ENCODE measurements at regions of chr14 and their contacts with region 1.

Region 1: DNA sequence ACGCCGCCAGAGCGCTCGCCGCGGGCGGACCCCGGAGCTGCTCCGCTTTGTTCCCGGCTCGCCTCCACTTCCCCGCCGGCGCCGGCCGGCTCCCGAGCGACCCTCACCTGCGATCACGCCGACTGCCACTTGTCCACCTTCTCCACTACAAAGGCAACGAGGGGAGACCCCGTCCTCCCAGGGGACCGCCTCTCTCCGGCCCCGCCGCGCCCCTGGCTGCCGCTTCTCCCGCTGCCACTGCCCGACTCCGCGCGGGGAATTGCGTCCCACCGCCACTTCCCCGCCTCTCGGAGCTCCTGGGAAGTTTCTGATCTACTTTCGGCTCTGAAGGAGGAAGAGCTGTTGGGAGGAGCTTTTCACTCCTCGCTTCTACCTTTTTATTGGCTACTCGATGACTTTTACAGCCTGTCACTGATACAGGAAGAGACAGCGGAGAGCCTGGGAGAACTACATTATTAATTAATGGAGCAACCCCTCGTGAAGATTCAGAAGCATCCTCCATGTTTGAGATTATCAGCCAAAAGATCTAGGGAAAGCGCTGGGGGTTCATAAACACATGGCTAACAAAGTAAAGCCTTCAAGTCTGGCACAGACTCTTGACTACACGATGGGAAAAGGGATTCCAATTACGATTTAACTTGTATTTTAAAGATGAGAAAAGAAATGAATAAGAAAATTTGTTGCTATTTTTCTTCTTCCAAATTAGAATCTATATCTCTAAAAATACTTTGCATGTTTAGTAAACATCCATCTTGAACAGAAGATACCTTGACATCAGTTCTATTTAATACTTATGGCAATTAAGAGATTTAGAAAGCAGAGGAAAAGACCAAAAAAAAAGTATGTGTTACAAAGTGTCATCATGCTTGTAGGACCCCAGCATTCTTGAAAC is at the start of gene BAZ1A:
- DNase-seq: peak; percentile 26 to 61 (median 55)
- ATAC-seq: peak; percentile 14
- H3K4me3 ChIP-seq: peak within 1 kb of the TSS; percentile 85
- H3K4me3 Mint-ChIP-seq: peak within 1 kb of the TSS; percentile 91 to 100 (median 99)
- H3K27ac ChIP-seq: peak within 1 kb of the TSS; percentile 96
- H3K27ac Mint-ChIP-seq: peak within 1 kb of the TSS; percentile 94 to 100 (median 99)
- H3K4me1 ChIP-seq: peaks cover 10 to 19% of the 10 kb centered on the region in 2 donors
- H3K4me1 Mint-ChIP-seq: peaks cover 18 to 40% (median 34%) of the 10 kb centered on the region in 7 donors
- H3K27me3 ChIP-seq: no peaks in the 10 kb centered on the region
- H3K27me3 Mint-ChIP-seq: no peaks in the 10 kb centered on the region
- total RNA-seq, gene BAZ1A: 47.4 to 62.5 (median 53.3) TPM

Region 2: GRCh38 chr14:33740531-33740930 is 1134.7 kb before region 1 on chr14:
- CTCF ChIA-PET with region 1: no interaction called
- POLR2A ChIA-PET with region 1: no interaction called
- intact Hi-C with region 1: no loop called
- DNase-seq: no peak
- ATAC-seq: no peak
- H3K4me3 ChIP-seq: no peak overlapping the region
- H3K4me3 Mint-ChIP-seq: no peak overlapping the region
- H3K27ac ChIP-seq: no peak overlapping the region
- H3K27ac Mint-ChIP-seq: no peak overlapping the region
- H3K4me1 ChIP-seq: no peaks in the 10 kb centered on the region
- H3K4me1 Mint-ChIP-seq: no peaks in the 10 kb centered on the region
- H3K27me3 ChIP-seq: no peaks in the 10 kb centered on the region
- H3K27me3 Mint-ChIP-seq: no peaks in the 10 kb centered on the region

Region 3: DNA sequence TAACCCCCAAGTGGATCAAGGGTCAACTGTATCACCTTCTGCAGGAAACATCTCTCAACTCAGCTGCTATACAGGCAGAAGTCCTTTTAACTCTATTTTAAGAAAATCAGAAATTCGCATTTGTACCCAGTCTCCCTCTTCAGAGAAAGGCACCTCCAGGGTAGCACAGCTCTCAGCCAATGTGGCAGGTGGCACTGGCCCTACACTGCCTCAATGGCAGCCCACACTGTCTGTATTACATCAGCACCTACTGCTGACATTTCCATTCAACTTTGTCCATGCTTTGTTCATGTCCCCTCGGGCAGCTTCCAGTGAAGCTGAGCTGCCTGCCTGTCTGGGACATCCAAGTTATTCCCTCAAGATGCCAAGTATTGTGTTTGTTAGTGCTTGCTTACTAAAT is 422.0 kb before region 1 on chr14:
- CTCF ChIA-PET with region 1: no interaction called
- POLR2A ChIA-PET with region 1: no interaction called
- intact Hi-C with region 1: no loop called
- DNase-seq: no peak
- ATAC-seq: no peak
- H3K4me3 ChIP-seq: no peak overlapping the region
- H3K4me3 Mint-ChIP-seq: no peak overlapping the region
- H3K27ac ChIP-seq: no peak overlapping the region
- H3K27ac Mint-ChIP-seq: no peak overlapping the region
- H3K4me1 ChIP-seq: no peaks in the 10 kb centered on the region
- H3K4me1 Mint-ChIP-seq: peaks cover 0 to 7% (median 0%) of the 10 kb centered on the region in 7 donors
- H3K27me3 ChIP-seq: no peaks in the 10 kb centered on the region
- H3K27me3 Mint-ChIP-seq: no peaks in the 10 kb centered on the region

Region 4: DNA sequence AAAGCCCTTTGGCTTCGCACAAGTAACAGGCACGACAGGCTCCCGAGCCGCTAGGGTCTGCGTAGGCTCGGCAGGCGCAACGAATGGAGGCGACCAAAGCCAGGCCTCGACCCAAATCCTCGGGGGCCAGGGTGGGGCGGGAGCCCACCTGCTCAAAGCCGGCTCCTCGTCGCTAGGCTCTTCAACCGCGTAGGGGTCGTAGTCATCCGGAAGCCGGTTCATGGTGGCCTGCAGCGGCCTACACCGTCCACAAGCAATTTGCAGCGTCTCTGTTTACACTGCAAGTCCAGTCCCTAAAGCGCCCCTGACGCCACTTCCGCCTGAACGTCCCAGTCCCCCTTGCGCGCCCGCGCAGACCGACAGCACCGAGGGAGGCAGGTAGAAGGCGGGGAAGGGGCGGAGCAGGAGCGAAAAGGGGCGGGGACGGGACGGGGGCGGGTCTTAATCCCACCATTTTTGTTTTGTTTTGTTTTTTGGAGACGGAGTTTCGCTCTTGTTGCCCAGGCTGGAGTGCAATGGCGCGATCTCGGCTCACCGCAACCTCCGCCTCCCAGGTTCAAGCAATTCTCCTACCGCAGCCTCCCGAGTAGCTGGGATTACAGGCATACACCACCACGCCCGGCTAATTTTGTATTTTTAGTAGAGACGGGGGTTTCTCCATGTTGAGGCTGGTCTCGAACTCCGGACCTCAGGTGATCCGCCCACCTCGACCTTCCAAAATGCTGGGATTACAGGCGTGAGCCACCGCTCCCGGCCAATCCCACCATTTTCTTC is 335.7 kb before region 1 on chr14 and contains the start of gene EAPP:
- CTCF ChIA-PET with region 1: no interaction called
- POLR2A ChIA-PET with region 1: interaction called, 4 read pairs
- intact Hi-C with region 1: loop called in 1 of 2 experiments (anchors 5 kb)
- DNase-seq: peak; percentile 84 to 95 (median 91)
- ATAC-seq: peak; percentile 100
- H3K4me3 ChIP-seq: peak within 1 kb of the TSS; percentile 100
- H3K4me3 Mint-ChIP-seq: peak within 1 kb of the TSS; percentile 95 to 99 (median 99)
- H3K27ac ChIP-seq: peak within 1 kb of the TSS; percentile 97
- H3K27ac Mint-ChIP-seq: peak within 1 kb of the TSS; percentile 95 to 100 (median 99)
- H3K4me1 ChIP-seq: peaks cover 18 to 24% of the 10 kb centered on the region in 2 donors
- H3K4me1 Mint-ChIP-seq: peaks cover 5 to 45% (median 31%) of the 10 kb centered on the region in 7 donors
- H3K27me3 ChIP-seq: no peaks in the 10 kb centered on the region
- H3K27me3 Mint-ChIP-seq: no peaks in the 10 kb centered on the region
- total RNA-seq, gene EAPP: 34.8 to 84.3 (median 60.9) TPM

Region 5: GRCh38 chr14:34671716-34672115 is 203.6 kb before region 1 on chr14:
- CTCF ChIA-PET with region 1: no interaction called
- POLR2A ChIA-PET with region 1: no interaction called
- intact Hi-C with region 1: loop called in 1 of 2 experiments (anchors 1 kb)
- DNase-seq: no peak
- ATAC-seq: no peak
- H3K4me3 ChIP-seq: no peak overlapping the region
- H3K4me3 Mint-ChIP-seq: no peak overlapping the region
- H3K27ac ChIP-seq: no peak overlapping the region
- H3K27ac Mint-ChIP-seq: no peak overlapping the region
- H3K4me1 ChIP-seq: no peaks in the 10 kb centered on the region
- H3K4me1 Mint-ChIP-seq: peaks cover 0 to 1% (median 0%) of the 10 kb centered on the region in 7 donors
- H3K27me3 ChIP-seq: no peaks in the 10 kb centered on the region
- H3K27me3 Mint-ChIP-seq: peaks cover 0 to 2% (median 0%) of the 10 kb centered on the region in 5 donors

Region 6: GRCh38 chr14:34804933-34805332 is 70.3 kb before region 1 on chr14:
- CTCF ChIA-PET with region 1: no interaction called
- POLR2A ChIA-PET with region 1: interaction called, 5 read pairs
- intact Hi-C with region 1: loop called in 1 of 2 experiments (anchors 5 kb)
- DNase-seq: no peak
- ATAC-seq: no peak
- H3K4me3 ChIP-seq: no peak overlapping the region
- H3K4me3 Mint-ChIP-seq: no peak overlapping the region
- H3K27ac ChIP-seq: no peak overlapping the region
- H3K27ac Mint-ChIP-seq: peak overlapping the region in 1 of 9 donors; percentile 54
- H3K4me1 ChIP-seq: no peaks in the 10 kb centered on the region
- H3K4me1 Mint-ChIP-seq: peaks cover 0 to 8% (median 0%) of the 10 kb centered on the region in 7 donors
- H3K27me3 ChIP-seq: no peaks in the 10 kb centered on the region
- H3K27me3 Mint-ChIP-seq: no peaks in the 10 kb centered on the region

Region 7: GRCh38 chr14:34857689-34858449 is 17.4 kb before region 1 on chr14:
- CTCF ChIA-PET with region 1: interaction called, 3 read pairs
- POLR2A ChIA-PET with region 1: interaction called, 10 read pairs
- intact Hi-C with region 1: loop called in 1 of 2 experiments (anchors 1 kb)
- DNase-seq: peak in 7 of 9 donors; percentile 20 to 76 (median 63)
- ATAC-seq: peak; percentile 84
- H3K4me3 ChIP-seq: no peak overlapping the region
- H3K4me3 Mint-ChIP-seq: peak overlapping the region; percentile 19 to 78 (median 48)
- H3K27ac ChIP-seq: no peak overlapping the region
- H3K27ac Mint-ChIP-seq: peak overlapping the region; percentile 41 to 92 (median 79)
- H3K4me1 ChIP-seq: peaks cover 7 to 25% of the 10 kb centered on the region in 2 donors
- H3K4me1 Mint-ChIP-seq: peaks cover 17 to 64% (median 48%) of the 10 kb centered on the region in 7 donors
- H3K27me3 ChIP-seq: no peaks in the 10 kb centered on the region
- H3K27me3 Mint-ChIP-seq: no peaks in the 10 kb centered on the region

Region 8: GRCh38 chr14:35292051-35292769 is 416.9 kb after region 1 on chr14 and contains the start of gene PSMA6:
- CTCF ChIA-PET with region 1: no interaction called
- POLR2A ChIA-PET with region 1: no interaction called
- intact Hi-C with region 1: loop called (anchors 1 kb)
- DNase-seq: peak; percentile 96 to 99 (median 99)
- ATAC-seq: peak; percentile 99
- H3K4me3 ChIP-seq: peak within 1 kb of the TSS; percentile 89
- H3K4me3 Mint-ChIP-seq: peak within 1 kb of the TSS; percentile 92 to 99 (median 97)
- H3K27ac ChIP-seq: peak within 1 kb of the TSS; percentile 90
- H3K27ac Mint-ChIP-seq: peak within 1 kb of the TSS; percentile 94 to 99 (median 96)
- H3K4me1 ChIP-seq: peaks cover 16 to 22% of the 10 kb centered on the region in 2 donors
- H3K4me1 Mint-ChIP-seq: peaks cover 17 to 54% (median 51%) of the 10 kb centered on the region in 7 donors
- H3K27me3 ChIP-seq: no peaks in the 10 kb centered on the region
- H3K27me3 Mint-ChIP-seq: no peaks in the 10 kb centered on the region
- total RNA-seq, gene PSMA6: 76.6 to 274 (median 90.0) TPM

Measured in naive thymus-derived CD4-positive, alpha-beta T cell (primary cell).